ENCODE measurements at regions of chr3 and their contacts with region 1.

Region 1: DNA sequence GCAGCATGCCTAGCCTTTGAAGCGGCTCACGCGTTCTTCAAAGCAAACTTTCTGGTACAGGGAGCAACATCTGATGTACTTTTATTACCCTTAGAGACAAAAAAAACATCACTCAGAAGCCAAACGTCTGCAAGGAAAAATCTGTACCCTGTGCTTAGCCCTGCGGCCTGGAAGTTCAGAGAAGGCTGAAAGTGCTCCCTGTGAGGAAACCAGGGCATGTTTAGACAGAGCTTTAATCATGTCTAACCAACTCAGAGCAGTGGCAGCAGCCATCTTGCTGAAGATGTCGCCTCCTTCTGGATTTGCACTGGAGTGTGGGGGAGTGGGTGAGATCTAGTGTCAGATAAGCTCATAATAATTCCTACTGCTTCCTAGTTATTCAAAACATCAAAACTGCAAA is 170.4 kb downstream of the P3H2 start:
- DNase-seq: no peak
- ATAC-seq: no peak
- H3K4me3 ChIP-seq: no peak overlapping the region
- H3K27ac ChIP-seq: no peak overlapping the region
- H3K4me1 ChIP-seq: no peaks in the 10 kb centered on the region
- H3K27me3 ChIP-seq: no peaks in the 10 kb centered on the region
- CTCF ChIP-seq: no peak
- POLR2A ChIP-seq: no peak

Region 2: DNA sequence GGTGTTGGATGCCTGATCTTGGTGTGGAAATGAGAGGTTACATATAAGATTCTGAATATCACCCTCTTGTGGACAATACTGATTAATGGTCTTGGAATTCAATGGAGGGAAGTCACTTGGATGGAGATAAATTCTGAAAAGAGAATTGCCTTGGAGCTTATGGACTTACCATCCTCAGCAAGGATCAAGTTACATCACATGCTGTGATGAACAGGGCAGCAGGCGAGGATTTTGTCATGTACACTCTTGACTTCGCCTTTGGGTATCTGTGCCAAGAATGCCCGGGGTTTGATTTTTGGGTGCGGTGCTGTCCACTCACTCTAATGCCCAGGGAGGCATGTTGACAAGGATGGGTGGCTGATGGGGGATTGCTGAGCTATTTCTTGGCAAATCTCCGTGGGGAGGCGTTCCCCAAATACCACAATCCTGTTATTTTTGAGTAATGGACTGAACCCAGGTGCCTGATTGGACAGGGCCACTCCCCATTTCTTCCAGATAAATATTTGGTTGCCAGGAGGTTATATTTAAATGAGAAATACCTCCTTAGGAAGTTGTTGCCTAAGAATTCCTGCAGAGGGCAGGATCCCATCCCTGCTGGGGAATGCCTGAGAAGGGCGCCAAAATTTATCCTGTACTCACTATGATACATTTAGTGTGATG is 682.2 kb before region 1 on chr3:
- intact Hi-C with region 1: loop called (anchors 10 kb)
- DNase-seq: peak in 1 of 4 donors; percentile 5
- ATAC-seq: peak; percentile 63
- H3K4me3 ChIP-seq: no peak overlapping the region
- H3K27ac ChIP-seq: no peak overlapping the region
- H3K4me1 ChIP-seq: no peaks in the 10 kb centered on the region
- H3K27me3 ChIP-seq: no peaks in the 10 kb centered on the region
- CTCF ChIP-seq: peak in 3 of 7 experiments; percentile 11 to 24 (median 13)
- POLR2A ChIP-seq: no peak

Region 3: GRCh38 chr3:190076601-190077396 is 126.5 kb after region 1 on chr3:
- intact Hi-C with region 1: no loop called
- DNase-seq: peak; percentile 14 to 50 (median 29)
- ATAC-seq: peak; percentile 83
- H3K4me3 ChIP-seq: no peak overlapping the region
- H3K27ac ChIP-seq: peak overlapping the region in 2 of 4 donors; percentile 40 to 58
- H3K4me1 ChIP-seq: no peaks in the 10 kb centered on the region
- H3K27me3 ChIP-seq: no peaks in the 10 kb centered on the region
- CTCF ChIP-seq: no peak
- POLR2A ChIP-seq: no peak

Region 4: DNA sequence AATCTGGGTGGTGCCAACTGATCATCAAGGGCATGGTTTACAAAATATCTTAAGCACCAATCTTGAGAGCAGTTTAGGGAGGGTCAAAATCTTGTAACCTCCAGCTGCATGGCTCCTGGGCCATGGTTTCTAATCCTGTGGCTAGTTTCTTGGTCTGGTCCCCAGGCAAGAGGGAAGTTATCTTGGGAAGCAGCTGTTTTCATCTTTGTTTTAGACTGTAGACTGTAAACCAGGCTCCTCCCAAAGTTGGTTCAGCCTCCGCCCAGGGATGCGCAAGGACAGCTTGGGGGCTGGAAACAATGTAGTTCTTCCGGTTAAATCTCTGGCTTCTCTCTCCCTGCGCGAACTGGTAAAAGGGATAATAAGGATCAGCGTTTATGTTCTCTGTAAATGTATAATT is 730.5 kb after region 1 on chr3:
- intact Hi-C with region 1: no loop called
- DNase-seq: no peak
- ATAC-seq: no peak
- H3K4me3 ChIP-seq: no peak overlapping the region
- H3K27ac ChIP-seq: no peak overlapping the region
- H3K4me1 ChIP-seq: no peaks in the 10 kb centered on the region
- H3K27me3 ChIP-seq: no peaks in the 10 kb centered on the region
- CTCF ChIP-seq: no peak
- POLR2A ChIP-seq: no peak

Measured in body of pancreas (tissue), 4 donors.